Posterior cingulate gyrus (tissue), 11 donors: ENCODE measurements at regions of chr15 and their contacts with region 1.

Region 1: DNA sequence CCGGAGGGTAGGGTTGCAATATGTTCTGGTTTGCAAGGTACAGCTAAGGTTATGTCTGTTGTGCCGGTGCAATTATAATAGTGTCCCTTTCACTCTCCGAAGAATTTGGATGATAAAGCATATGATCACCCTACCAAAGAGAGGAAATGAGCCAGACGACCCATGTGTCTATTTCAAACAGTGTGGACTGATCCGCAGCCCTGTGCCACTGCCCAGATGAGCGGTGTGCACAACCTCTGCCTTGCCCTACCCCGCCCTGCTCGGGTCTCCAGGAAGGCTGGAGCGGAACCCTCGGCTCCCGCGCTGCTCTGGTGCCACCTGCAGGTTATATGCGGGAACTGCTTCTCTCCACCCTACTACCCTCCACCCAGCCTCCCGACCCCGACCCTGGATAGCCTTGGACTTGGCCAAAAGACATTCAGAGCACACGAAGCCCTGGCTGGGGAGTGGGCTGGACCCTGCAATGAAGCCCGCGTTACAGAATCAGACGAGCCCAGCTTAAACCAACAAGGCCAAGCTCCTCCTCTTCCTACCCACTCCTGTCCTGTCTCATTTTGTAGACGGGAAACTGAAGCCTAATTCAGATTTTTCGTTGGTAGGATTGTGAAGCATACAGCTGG is 68.4 kb upstream of the CHRNB4 start:
- DNase-seq: peak; percentile 28 to 95 (median 72)

Region 2: GRCh38 chr15:78618490-78618934 is 90.9 kb before region 1 on chr15:
- intact Hi-C with region 1: loop called (anchors 1 kb)
- DNase-seq: peak; percentile 64 to 95 (median 90)

Region 3: DNA sequence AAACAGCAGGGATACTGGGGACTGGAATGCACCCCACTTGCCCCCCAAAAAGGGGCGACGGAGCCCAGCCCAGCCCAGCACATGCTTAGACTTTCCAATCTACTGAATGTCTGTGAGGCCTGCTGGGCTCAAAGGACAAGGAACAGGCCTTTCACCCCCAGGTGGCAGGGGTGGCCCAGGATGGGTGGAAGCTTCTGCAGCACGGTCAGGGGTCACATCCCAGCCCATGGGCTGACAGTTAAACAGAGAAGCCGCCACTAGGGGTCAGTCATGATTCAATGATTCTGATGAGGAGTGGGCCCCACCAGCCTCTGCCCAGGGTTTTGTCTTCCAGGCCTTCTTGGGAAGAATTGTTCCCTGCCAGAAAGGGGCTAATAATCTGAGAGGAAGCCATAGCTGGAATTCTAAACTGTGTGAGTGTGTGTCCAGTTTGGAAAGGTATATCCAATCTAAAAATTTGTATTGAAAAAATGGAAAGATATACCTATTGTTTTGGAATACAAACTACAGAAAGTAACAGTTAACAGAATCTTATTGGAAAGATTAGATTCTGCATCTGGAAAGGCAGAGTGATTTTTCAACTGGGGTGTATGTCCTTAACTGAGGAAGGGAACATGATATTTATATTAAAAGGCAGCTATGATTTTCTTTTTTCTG is 70.6 kb before region 1 on chr15:
- intact Hi-C with region 1: loop called (anchors 2 kb)
- DNase-seq: peak in 5 of 10 donors; percentile 32 to 75 (median 49)